ENCODE measurements at regions of chr18 and their contacts with region 1.

Region 1: GRCh38 chr18:31512203-31512764 is 14.3 kb downstream of the DSG2 start:
- DNase-seq: peak; percentile 72 to 84
- H3K4me3 ChIP-seq: no peak overlapping the region
- H3K27ac ChIP-seq: peak overlapping the region; percentile 95
- H3K4me1 ChIP-seq: peaks cover 46% of the 10 kb centered on the region
- H3K27me3 ChIP-seq: no peaks in the 10 kb centered on the region
- CTCF ChIP-seq: no peak

Region 2: GRCh38 chr18:31101183-31102024 is 410.9 kb before region 1 on chr18:
- CTCF ChIA-PET with region 1: no interaction called
- POLR2A ChIA-PET with region 1: no interaction called
- intact Hi-C with region 1: loop called (anchors 5 kb)
- DNase-seq: peak in 1 of 2 experiments; percentile 50
- H3K4me3 ChIP-seq: peak overlapping the region; percentile 70
- H3K27ac ChIP-seq: peak overlapping the region; percentile 75
- H3K4me1 ChIP-seq: peaks cover 45% of the 10 kb centered on the region
- H3K27me3 ChIP-seq: no peaks in the 10 kb centered on the region
- CTCF ChIP-seq: no peak

Region 3: DNA sequence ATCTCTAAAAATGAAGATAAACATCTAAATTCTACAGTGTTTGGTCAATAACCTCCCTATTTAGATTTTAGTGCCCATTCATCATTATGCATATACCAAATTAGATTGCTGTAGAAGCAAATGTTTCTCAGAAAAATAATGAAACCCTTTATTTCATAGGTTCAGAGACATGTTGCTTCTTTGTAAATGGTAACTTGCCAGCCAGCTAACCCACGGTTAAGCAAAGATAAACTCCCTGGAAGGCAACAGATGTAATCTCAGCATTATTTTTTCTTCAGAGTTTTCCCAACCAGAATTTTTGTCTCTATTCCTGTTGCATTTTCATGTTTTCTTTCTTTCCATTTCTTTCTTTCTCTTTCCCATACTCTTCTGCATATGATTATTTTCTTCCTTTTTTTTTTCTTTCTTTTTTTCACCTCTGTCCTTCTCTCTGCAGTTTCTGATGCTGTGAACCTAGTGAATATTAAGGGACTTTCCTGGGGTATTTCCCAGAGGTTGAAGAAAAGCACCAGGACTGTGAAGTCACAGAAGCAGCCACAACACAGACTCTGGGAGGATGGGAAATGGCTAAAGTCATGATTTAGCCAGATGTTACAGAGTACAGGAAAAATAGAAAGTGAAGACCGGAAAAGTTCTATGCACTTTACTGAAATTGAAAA is 244.3 kb before region 1 on chr18:
- CTCF ChIA-PET with region 1: no interaction called
- POLR2A ChIA-PET with region 1: no interaction called
- intact Hi-C with region 1: loop called (anchors 5 kb)
- DNase-seq: no peak
- H3K4me3 ChIP-seq: no peak overlapping the region
- H3K27ac ChIP-seq: no peak overlapping the region
- H3K4me1 ChIP-seq: no peaks in the 10 kb centered on the region
- H3K27me3 ChIP-seq: no peaks in the 10 kb centered on the region
- CTCF ChIP-seq: no peak

Region 4: DNA sequence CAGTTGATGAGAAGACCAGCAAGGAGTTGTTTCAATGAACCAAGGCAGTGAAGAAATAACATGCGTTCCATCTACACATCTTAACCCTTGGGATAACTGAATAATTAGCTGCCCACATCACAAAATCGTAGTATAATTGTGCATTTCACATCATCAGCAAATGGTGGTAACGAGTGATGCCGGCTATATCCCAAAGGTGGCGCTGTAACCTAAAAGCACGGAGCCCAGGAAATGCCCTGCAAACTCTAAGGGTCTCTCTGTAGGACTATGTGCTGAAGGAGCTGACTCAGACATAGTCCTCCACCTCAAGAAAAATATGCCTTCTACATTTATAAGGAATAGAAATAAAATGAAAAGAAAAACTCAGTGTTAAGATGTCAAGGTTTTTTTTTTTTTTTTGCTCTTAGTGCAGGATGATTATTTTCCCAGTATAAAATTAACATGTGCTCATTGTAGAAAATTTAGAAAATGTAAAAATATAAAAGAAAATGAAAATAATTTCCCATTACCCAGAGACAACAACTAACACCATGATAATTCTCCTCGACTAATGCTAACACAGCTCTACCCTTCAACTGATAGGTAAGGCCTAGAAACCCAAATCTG is 87.8 kb before region 1 on chr18:
- CTCF ChIA-PET with region 1: interaction called, 3 read pairs
- POLR2A ChIA-PET with region 1: no interaction called
- intact Hi-C with region 1: loop called (anchors 1 kb)
- DNase-seq: peak in 1 of 2 experiments; percentile 46
- H3K4me3 ChIP-seq: no peak overlapping the region
- H3K27ac ChIP-seq: no peak overlapping the region
- H3K4me1 ChIP-seq: no peaks in the 10 kb centered on the region
- H3K27me3 ChIP-seq: no peaks in the 10 kb centered on the region
- CTCF ChIP-seq: peak; percentile 89

Region 5: GRCh38 chr18:31454066-31454708 is 58.1 kb before region 1 on chr18:
- CTCF ChIA-PET with region 1: no interaction called
- POLR2A ChIA-PET with region 1: no interaction called
- intact Hi-C with region 1: loop called (anchors 1 kb)
- DNase-seq: peak; percentile 49 to 73
- H3K4me3 ChIP-seq: no peak overlapping the region
- H3K27ac ChIP-seq: peak overlapping the region; percentile 80
- H3K4me1 ChIP-seq: no peaks in the 10 kb centered on the region; the same call in 1 of the 2 replicates
- H3K27me3 ChIP-seq: no peaks in the 10 kb centered on the region
- CTCF ChIP-seq: no peak

Region 6: GRCh38 chr18:31490387-31490786 is 21.9 kb before region 1 on chr18:
- CTCF ChIA-PET with region 1: no interaction called
- POLR2A ChIA-PET with region 1: no interaction called
- intact Hi-C with region 1: loop called (anchors 1 kb)
- DNase-seq: peak in 1 of 2 experiments; percentile 89
- H3K4me3 ChIP-seq: peak overlapping the region; percentile 42; the same call in 1 of the 2 replicates
- H3K27ac ChIP-seq: peak overlapping the region; percentile 97
- H3K4me1 ChIP-seq: peaks cover 57% of the 10 kb centered on the region
- H3K27me3 ChIP-seq: no peaks in the 10 kb centered on the region
- CTCF ChIP-seq: no peak

Region 7: GRCh38 chr18:31497837-31498573 is 14.3 kb before region 1 on chr18 and contains the start of gene DSG2:
- CTCF ChIA-PET with region 1: no interaction called
- POLR2A ChIA-PET with region 1: no interaction called
- intact Hi-C with region 1: loop called (anchors 2 kb)
- DNase-seq: peak in 1 of 2 experiments; percentile 80
- H3K4me3 ChIP-seq: peak within 1 kb of the TSS; percentile 96
- H3K27ac ChIP-seq: peak within 1 kb of the TSS; percentile 82
- H3K4me1 ChIP-seq: peaks cover 12% of the 10 kb centered on the region
- H3K27me3 ChIP-seq: no peaks in the 10 kb centered on the region
- CTCF ChIP-seq: no peak
- total RNA-seq, gene DSG2: 66.0 and 90.1 TPM in 2 replicates

Measured in PC-9 (cell line).